Dorsolateral prefrontal cortex (tissue), 120 donors: ENCODE measurements at regions of chr6 and their contacts with region 1.

Region 1: GRCh38 chr6:82247634-82248232 is at the start of gene IBTK:
- DNase-seq: peak; percentile 93 to 98 (median 96)
- H3K4me3 ChIP-seq: peak within 1 kb of the TSS; percentile 60 to 96 (median 88)
- H3K27ac ChIP-seq: peak within 1 kb of the TSS; percentile 40 to 99 (median 96)
- H3K27me3 ChIP-seq: no peaks in the 10 kb centered on the region
- CTCF ChIP-seq: peak in 18 of 56 donors; percentile 7 to 43 (median 28)
- total RNA-seq, gene IBTK: 24.8 to 47.0 (median 36.3) TPM

Region 2: DNA sequence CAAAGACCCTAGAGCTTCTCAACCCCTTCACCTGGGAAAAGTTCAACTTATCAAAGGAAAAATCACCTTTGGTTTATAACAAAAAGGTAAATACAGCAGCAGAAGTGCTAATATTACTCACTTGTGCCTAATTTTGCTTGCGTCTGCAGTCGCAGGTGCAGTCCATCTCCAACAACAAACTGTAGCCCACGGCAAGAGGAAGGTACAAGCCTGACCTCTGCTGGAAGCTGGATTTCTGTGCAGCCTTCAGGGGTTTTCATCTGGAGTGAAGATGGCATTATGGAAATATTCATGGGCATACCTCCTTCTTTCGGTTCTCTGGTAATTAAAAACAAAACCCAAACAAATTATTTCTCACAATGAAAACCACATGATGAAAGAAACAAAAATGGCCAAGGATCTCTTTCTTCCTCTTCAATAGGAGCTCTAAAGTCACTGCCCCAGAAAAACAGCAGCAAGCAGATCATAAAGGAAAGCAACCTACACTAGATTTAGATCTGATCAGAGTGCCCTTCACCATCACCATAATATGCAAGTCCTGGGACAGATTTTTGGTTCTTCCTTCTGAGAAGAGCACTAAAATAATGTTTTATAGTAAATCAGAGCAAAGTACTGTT is 810.1 kb after region 1 on chr6:
- intact Hi-C with region 1: loop called in 1 of 2 experiments (anchors 5 kb)
- DNase-seq: peak in 8 of 10 donors; percentile 23 to 66 (median 58)
- H3K4me3 ChIP-seq: peak overlapping the region in 7 of 59 donors; percentile 4 to 30 (median 21)
- H3K27ac ChIP-seq: no peak overlapping the region
- H3K27me3 ChIP-seq: no peaks in the 10 kb centered on the region
- CTCF ChIP-seq: peak; percentile 36 to 84 (median 70)

Region 3: GRCh38 chr6:83192871-83193746 is 945.4 kb after region 1 on chr6 and contains the starts of genes PGM3 and RWDD2A:
- intact Hi-C with region 1: loop called in 1 of 2 experiments (anchors 10 kb)
- DNase-seq: peak; percentile 85 to 96 (median 91)
- H3K4me3 ChIP-seq: peak within 1 kb of the TSS; percentile 70 to 99 (median 92)
- H3K27ac ChIP-seq: peak within 1 kb of the TSS in 58 of 59 donors; percentile 32 to 93 (median 86)
- H3K27me3 ChIP-seq: no peaks in the 10 kb centered on the region
- CTCF ChIP-seq: peak in 30 of 56 donors; percentile 6 to 54 (median 26)
- total RNA-seq, gene PGM3: 23.6 to 72.4 (median 42.1) TPM
- total RNA-seq, gene RWDD2A: 6.5 to 17.7 (median 12.6) TPM

Region 4: DNA sequence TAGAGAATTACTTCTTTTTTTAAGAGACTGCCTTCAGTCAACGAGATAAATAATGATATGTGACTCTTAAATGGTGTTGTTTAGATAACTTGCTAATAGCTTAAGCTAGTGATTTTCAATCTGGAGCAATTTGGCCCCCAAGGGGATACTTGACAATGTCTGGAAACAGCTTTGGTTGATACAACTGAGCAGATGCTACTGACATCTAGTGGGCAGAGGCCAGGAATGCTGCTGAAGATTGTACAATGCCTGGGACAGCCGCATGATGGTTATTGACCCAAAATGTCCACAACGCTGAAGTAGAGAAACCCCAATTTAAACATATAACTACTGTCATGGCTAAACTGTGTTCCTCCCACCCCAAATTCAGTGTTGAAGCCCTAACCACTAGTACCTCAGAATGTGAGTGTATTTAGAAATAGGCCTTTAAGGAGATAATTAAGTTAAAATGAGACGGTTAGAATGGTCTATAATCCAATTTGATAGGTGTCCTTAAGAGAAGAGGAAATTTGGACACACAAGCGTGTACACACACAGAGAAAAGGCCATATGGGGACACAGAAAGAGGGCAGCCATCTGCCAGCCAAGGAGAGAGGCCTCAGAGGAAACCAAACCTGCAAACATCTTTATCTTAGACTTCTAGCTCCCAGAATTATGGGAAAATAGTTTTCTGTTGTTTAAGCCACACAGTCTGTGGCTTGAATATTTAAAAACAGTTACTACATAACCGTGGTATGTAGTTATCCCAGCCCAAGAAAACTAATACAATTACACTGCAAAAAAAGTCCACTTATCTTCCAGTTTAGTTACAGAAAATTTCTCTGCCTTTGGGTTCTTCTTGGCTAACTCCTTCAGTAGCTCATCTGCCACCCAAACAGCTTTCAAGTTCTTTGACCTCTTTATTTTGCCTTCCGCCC is 967.7 kb after region 1 on chr6:
- intact Hi-C with region 1: loop called in 1 of 2 experiments (anchors 10 kb)
- DNase-seq: peak; percentile 25 to 87 (median 64)
- H3K4me3 ChIP-seq: no peak overlapping the region
- H3K27ac ChIP-seq: peak overlapping the region in 3 of 59 donors; percentile 7 to 64 (median 16)
- H3K27me3 ChIP-seq: no peaks in the 10 kb centered on the region
- CTCF ChIP-seq: peak; percentile 45 to 90 (median 84)